MCF 10A (cell line): ENCODE measurements at regions of chr2 and their contacts with region 1.

Region 1: GRCh38 chr2:158456309-158457066 is at the starts of genes CCDC148 and PKP4:
- DNase-seq: peak; percentile 95
- H3K4me3 Mint-ChIP-seq: peak within 1 kb of the TSS; percentile 84
- H3K27ac Mint-ChIP-seq: peak within 1 kb of the TSS; percentile 94
- H3K4me1 Mint-ChIP-seq: peaks cover 15% of the 10 kb centered on the region
- H3K27me3 Mint-ChIP-seq: no peaks in the 10 kb centered on the region
- CTCF ChIP-seq: no peak
- total RNA-seq, gene CCDC148: 0.51 and 0.96 TPM in 2 replicates
- total RNA-seq, gene PKP4: 62.3 and 63.7 TPM in 2 replicates

Region 2: GRCh38 chr2:158034199-158034866 is 422.2 kb before region 1 on chr2:
- CTCF ChIA-PET with region 1: interaction called, 5 read pairs
- POLR2A ChIA-PET with region 1: interaction called, 4 read pairs
- intact Hi-C with region 1: loop called (anchors 2 kb)
- DNase-seq: peak; percentile 68
- H3K4me3 Mint-ChIP-seq: no peak overlapping the region
- H3K27ac Mint-ChIP-seq: no peak overlapping the region
- H3K4me1 Mint-ChIP-seq: no peaks in the 10 kb centered on the region
- H3K27me3 Mint-ChIP-seq: peaks cover 16% of the 10 kb centered on the region
- CTCF ChIP-seq: peak; percentile 55

Region 3: GRCh38 chr2:158321264-158321663 is 135.2 kb before region 1 on chr2:
- CTCF ChIA-PET with region 1: interaction called, 6 read pairs
- POLR2A ChIA-PET with region 1: interaction called, 33 read pairs
- intact Hi-C with region 1: no loop called
- DNase-seq: peak; percentile 88
- H3K4me3 Mint-ChIP-seq: no peak overlapping the region
- H3K27ac Mint-ChIP-seq: peak overlapping the region; percentile 82
- H3K4me1 Mint-ChIP-seq: peaks cover 11% of the 10 kb centered on the region
- H3K27me3 Mint-ChIP-seq: no peaks in the 10 kb centered on the region
- CTCF ChIP-seq: no peak

Region 4: DNA sequence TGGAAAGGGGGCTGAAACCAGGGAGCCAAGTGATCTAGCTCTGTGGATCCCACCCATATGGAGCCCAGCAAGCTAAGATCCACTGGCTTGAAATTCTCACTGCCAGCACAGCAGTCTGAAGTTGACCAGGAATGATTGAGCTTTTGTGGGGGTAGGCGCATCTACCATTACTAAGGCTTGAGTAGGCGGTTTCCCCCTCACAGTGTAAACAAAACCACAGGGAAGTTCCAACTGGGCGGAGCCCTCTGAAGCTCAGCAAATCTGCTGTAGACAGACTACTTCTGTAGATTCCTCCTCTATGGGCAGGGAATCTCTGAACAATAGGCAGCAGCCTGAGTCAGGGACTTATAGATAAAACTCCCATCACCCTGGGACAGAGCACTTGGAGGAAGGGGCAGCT is 96.6 kb before region 1 on chr2:
- CTCF ChIA-PET with region 1: no interaction called
- POLR2A ChIA-PET with region 1: no interaction called
- intact Hi-C with region 1: no loop called
- DNase-seq: peak; percentile 30
- H3K4me3 Mint-ChIP-seq: no peak overlapping the region
- H3K27ac Mint-ChIP-seq: no peak overlapping the region
- H3K4me1 Mint-ChIP-seq: no peaks in the 10 kb centered on the region
- H3K27me3 Mint-ChIP-seq: no peaks in the 10 kb centered on the region
- CTCF ChIP-seq: no peak

Region 5: DNA sequence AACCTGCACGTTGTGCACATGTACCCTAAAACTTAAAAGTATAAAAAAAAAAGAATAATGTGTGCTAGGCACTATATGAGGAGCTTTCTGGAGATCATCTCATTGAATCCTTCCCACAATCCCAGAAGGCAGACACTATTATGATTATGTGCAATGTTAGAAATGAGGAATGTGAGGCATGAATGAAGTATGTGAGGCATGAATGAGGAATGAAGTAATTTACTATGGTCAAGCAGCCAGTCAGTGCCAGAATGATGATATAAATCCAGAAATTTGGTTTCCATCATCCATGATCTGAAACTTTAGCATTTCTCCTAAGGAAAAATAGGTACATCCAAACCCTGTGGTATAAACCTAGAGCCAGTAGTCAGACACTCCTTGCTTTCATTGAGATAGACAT is 42.0 kb before region 1 on chr2:
- CTCF ChIA-PET with region 1: no interaction called
- POLR2A ChIA-PET with region 1: no interaction called
- intact Hi-C with region 1: no loop called
- DNase-seq: no peak
- H3K4me3 Mint-ChIP-seq: no peak overlapping the region
- H3K27ac Mint-ChIP-seq: no peak overlapping the region
- H3K4me1 Mint-ChIP-seq: no peaks in the 10 kb centered on the region
- H3K27me3 Mint-ChIP-seq: no peaks in the 10 kb centered on the region
- CTCF ChIP-seq: no peak

Region 6: DNA sequence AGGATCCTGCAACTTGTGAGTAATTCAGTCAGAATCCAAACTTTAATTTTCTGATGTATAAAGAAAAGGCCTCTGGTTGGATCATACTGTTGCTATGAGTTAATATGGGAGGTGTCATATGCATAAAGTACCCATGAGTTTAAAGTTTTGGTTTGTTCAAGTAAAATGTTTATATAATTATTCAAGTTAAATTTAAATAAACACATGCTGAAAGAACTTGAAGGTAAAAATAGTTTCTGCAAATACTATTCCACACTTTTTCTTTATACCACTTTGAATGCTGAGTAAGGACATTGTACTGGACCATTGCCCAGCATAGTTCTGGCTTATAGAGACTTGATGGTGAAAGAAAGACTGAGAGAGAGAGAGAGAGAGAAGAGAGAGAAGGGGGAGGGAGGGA is 30.9 kb after region 1 on chr2:
- CTCF ChIA-PET with region 1: interaction called, 6 read pairs
- POLR2A ChIA-PET with region 1: interaction called, 11 read pairs
- intact Hi-C with region 1: no loop called
- DNase-seq: peak; percentile 34
- H3K4me3 Mint-ChIP-seq: no peak overlapping the region
- H3K27ac Mint-ChIP-seq: peak overlapping the region; percentile 2
- H3K4me1 Mint-ChIP-seq: peaks cover 47% of the 10 kb centered on the region
- H3K27me3 Mint-ChIP-seq: no peaks in the 10 kb centered on the region
- CTCF ChIP-seq: no peak

Region 7: GRCh38 chr2:158586491-158586890 is 130.0 kb after region 1 on chr2:
- CTCF ChIA-PET with region 1: no interaction called
- POLR2A ChIA-PET with region 1: interaction called, 12 read pairs
- intact Hi-C with region 1: no loop called
- DNase-seq: peak; percentile 80
- H3K4me3 Mint-ChIP-seq: no peak overlapping the region
- H3K27ac Mint-ChIP-seq: peak overlapping the region; percentile 65
- H3K4me1 Mint-ChIP-seq: peaks cover 8% of the 10 kb centered on the region
- H3K27me3 Mint-ChIP-seq: no peaks in the 10 kb centered on the region
- CTCF ChIP-seq: no peak

Region 8: GRCh38 chr2:158619496-158619895 is 163.0 kb after region 1 on chr2:
- CTCF ChIA-PET with region 1: interaction called, 24 read pairs
- POLR2A ChIA-PET with region 1: interaction called, 8 read pairs
- intact Hi-C with region 1: loop called (anchors 2 kb)
- DNase-seq: peak; percentile 62
- H3K4me3 Mint-ChIP-seq: no peak overlapping the region
- H3K27ac Mint-ChIP-seq: peak overlapping the region; percentile 57
- H3K4me1 Mint-ChIP-seq: peaks cover 11% of the 10 kb centered on the region
- H3K27me3 Mint-ChIP-seq: no peaks in the 10 kb centered on the region
- CTCF ChIP-seq: no peak

Region 9: DNA sequence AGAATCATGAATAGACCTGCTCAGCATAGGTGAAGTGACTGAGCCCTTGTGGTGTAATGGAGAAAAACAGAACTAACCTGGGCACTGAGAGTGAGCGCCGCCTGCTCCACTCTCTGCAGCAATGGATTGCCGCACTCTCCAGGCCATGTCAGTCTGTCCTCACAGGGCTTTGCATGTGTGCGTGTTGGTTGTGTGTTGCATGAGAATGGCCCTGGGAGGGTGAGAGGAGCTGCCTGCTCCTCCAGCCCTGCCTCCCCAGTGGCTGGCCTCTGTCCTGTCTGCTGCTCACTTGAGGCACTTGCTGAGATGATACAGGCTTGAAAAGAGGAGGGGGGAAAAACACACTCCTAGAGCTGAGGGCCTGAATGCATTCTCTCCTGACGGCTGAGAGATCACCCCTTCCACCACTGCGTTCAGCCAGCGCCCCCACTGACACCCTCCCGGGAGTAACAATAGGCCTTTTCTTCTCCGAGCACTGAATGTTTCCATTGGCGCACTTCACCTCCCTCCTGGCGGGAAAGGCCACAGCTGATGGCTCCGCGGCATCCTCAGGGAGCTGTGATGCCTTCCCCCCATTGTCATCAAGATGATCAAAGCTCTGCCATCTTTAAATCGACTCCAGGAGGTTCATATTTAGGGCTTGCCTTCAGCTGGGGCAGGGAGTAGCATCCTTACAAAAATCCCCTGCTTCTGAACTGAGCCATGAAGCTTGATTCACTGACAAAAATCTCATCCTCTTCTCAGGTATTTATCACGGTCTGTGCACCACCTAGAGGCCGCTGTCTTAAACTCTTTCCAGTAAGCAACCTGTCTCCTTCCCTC is 288.8 kb after region 1 on chr2:
- CTCF ChIA-PET with region 1: interaction called, 45 read pairs
- POLR2A ChIA-PET with region 1: no interaction called
- intact Hi-C with region 1: loop called (anchors 1 kb)
- DNase-seq: peak; percentile 62
- H3K4me3 Mint-ChIP-seq: no peak overlapping the region
- H3K27ac Mint-ChIP-seq: no peak overlapping the region
- H3K4me1 Mint-ChIP-seq: peaks cover 6% of the 10 kb centered on the region
- H3K27me3 Mint-ChIP-seq: peaks cover 38% of the 10 kb centered on the region
- CTCF ChIP-seq: peak; percentile 61